PC-3 (cell line): ENCODE measurements at regions of chr10 and their contacts with region 1.

Region 1: DNA sequence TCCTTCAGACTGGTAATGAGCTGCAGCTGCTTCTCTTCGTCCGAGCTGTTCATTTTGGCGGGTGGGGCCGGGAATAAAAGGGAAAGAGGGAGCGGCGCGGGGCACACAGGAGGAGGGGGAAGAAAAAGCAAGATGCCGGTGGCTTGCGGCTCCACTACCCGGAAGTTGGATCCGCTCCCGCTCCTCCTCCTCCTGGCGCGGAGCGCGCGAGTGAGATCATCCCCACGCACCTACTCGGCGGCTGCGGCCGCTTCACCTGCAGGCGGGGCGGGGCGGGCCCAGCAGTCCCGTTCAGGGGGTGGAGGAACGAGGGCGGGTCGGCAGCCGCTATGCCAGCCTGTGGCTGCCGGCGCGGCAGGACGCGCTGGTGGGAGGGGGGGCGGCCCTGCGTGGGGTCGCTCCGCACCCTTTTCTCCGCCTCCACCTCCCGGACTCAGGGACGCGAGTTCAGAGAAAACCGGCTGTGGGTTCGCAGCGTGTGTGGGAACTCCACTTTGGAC is at the start of gene SHTN1:
- DNase-seq: peak; percentile 88
- ATAC-seq: peak; percentile 80
- H3K4me3 ChIP-seq: peak within 1 kb of the TSS; percentile 92
- H3K27ac ChIP-seq: peak within 1 kb of the TSS; percentile 91
- H3K4me1 ChIP-seq: peaks cover 28% of the 10 kb centered on the region
- H3K27me3 ChIP-seq: no peaks in the 10 kb centered on the region
- CTCF ChIP-seq: no peak
- total RNA-seq, gene SHTN1: 9.0 and 13.0 TPM in 2 replicates

Region 2: DNA sequence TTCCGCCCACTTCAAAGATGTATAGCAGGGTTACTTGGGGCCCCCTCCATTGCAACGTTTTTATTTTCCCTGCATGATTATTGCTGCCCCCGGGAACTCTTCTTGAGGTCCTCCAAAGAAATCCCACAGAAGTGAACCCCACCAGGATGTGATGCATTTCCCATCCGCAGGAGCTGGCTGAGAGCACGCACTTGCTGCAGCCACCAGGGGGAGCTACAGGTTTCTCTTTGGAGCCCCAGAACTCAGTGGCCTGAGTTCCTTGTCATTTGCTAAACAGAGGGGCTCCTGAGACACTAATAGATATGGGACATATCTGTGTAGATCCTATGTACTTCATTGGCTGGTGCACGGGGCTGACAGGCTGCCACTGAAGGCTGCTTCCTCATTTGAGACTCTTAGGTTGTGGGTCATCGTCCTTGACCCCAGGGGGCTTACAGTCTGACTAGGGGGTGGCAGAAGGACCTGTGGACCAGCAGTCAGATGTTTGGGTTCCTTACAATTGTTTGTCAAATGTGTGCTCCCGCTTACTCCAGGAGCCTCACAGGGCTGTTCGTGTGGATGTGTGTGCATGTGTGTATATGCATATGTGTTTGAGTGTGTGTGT is 208.1 kb before region 1 on chr10:
- CTCF ChIA-PET with region 1: no interaction called
- POLR2A ChIA-PET with region 1: no interaction called
- intact Hi-C with region 1: loop called (anchors 5 kb)
- DNase-seq: peak; percentile 74
- ATAC-seq: peak; percentile 78
- H3K4me3 ChIP-seq: no peak overlapping the region
- H3K27ac ChIP-seq: no peak overlapping the region
- H3K4me1 ChIP-seq: no peaks in the 10 kb centered on the region
- H3K27me3 ChIP-seq: no peaks in the 10 kb centered on the region
- CTCF ChIP-seq: peak; percentile 89

Region 3: DNA sequence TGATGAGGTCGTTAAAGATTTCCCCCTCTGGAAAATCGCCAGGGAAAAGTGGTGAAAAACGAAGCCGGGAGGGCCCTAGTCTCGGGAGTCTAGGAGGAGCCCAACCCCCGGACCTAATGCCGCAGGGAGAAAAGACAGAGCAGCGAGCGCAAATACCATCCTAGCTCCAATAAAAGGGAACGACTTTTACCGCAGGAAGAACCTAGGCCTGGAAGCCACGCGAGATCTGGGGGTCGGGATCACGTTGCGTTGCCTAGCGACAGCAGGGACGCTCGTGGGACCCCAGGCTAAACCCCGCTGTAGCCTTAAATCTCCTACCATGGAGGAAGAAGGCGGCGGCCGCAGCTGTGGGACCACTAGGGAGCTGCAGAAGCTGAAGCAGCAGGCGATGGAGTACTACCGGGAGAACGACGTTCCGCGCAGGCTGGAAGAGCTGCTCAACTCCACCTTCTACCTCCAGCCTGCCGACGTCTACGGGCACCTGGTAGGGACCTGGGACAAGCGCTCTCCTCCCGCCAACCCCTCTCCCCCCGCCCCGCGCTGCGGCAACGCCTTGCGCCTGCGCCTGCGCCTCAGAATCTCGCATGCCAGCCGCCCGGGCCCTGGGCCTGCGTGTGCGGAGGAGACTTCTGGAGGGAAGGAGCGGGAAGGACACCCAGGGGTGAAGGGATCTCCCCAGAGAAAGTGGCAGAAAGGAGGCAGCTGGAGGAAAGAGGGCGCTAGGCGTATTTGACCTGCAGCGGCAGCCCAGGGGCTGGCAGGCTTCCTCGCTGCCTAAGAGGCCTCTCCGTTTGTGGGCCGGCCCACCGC is 155.6 kb before region 1 on chr10 and contains the start of gene ENO4:
- CTCF ChIA-PET with region 1: no interaction called
- POLR2A ChIA-PET with region 1: no interaction called
- intact Hi-C with region 1: loop called (anchors 1 kb)
- DNase-seq: peak; percentile 69
- ATAC-seq: peak; percentile 86
- H3K4me3 ChIP-seq: peak within 1 kb of the TSS; percentile 93
- H3K27ac ChIP-seq: peak within 1 kb of the TSS; percentile 18; the same call in 1 of the 2 replicates
- H3K4me1 ChIP-seq: peaks cover 7% of the 10 kb centered on the region
- H3K27me3 ChIP-seq: no peaks in the 10 kb centered on the region
- CTCF ChIP-seq: no peak
- total RNA-seq, gene ENO4: 0.35 TPM in 1 of 2 replicates, not detected in the other

Region 4: GRCh38 chr10:116888380-116889055 is 116.6 kb before region 1 on chr10:
- CTCF ChIA-PET with region 1: no interaction called
- POLR2A ChIA-PET with region 1: no interaction called
- intact Hi-C with region 1: loop called (anchors 2 kb)
- DNase-seq: peak; percentile 82
- ATAC-seq: peak; percentile 83
- H3K4me3 ChIP-seq: no peak overlapping the region
- H3K27ac ChIP-seq: peak overlapping the region; percentile 80
- H3K4me1 ChIP-seq: peaks cover 62% of the 10 kb centered on the region
- H3K27me3 ChIP-seq: no peaks in the 10 kb centered on the region
- CTCF ChIP-seq: no peak

Region 5: GRCh38 chr10:116947842-116948529 is 57.1 kb before region 1 on chr10:
- CTCF ChIA-PET with region 1: no interaction called
- POLR2A ChIA-PET with region 1: no interaction called
- intact Hi-C with region 1: loop called (anchors 2 kb)
- DNase-seq: peak; percentile 81
- ATAC-seq: peak; percentile 86
- H3K4me3 ChIP-seq: peak overlapping the region; percentile 58
- H3K27ac ChIP-seq: peak overlapping the region; percentile 79
- H3K4me1 ChIP-seq: peaks cover 22% of the 10 kb centered on the region
- H3K27me3 ChIP-seq: no peaks in the 10 kb centered on the region
- CTCF ChIP-seq: no peak

Region 6: DNA sequence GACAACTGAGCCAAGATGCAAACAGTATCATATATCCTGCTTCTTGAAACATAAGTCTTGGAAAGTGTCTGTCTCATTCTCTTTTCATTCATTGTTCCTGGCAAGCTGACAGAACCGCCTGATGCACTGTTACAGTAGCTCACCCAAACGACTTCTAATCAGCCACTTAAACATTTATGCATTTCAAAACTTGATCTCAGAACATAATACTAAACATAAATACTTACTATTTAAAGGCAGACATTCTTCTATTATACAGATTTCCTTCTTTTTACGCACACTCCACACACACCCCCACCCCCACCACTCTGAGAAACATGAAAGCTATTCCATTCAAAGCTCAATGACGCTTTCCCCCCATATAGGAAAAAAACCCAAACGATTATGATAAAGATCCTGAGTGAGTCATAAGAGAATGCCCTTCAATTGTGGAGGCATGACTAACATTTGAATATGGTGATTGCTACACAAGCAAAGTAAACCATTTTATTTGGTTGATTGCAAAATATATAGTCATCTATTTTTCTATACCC is 30.5 kb before region 1 on chr10:
- CTCF ChIA-PET with region 1: no interaction called
- POLR2A ChIA-PET with region 1: interaction called, 4 read pairs
- intact Hi-C with region 1: loop called (anchors 2 kb)
- DNase-seq: peak; percentile 88
- ATAC-seq: peak; percentile 79
- H3K4me3 ChIP-seq: peak overlapping the region; percentile 56; the same call in 1 of the 2 replicates
- H3K27ac ChIP-seq: peak overlapping the region; percentile 88
- H3K4me1 ChIP-seq: peaks cover 34% of the 10 kb centered on the region
- H3K27me3 ChIP-seq: no peaks in the 10 kb centered on the region
- CTCF ChIP-seq: no peak

Region 7: DNA sequence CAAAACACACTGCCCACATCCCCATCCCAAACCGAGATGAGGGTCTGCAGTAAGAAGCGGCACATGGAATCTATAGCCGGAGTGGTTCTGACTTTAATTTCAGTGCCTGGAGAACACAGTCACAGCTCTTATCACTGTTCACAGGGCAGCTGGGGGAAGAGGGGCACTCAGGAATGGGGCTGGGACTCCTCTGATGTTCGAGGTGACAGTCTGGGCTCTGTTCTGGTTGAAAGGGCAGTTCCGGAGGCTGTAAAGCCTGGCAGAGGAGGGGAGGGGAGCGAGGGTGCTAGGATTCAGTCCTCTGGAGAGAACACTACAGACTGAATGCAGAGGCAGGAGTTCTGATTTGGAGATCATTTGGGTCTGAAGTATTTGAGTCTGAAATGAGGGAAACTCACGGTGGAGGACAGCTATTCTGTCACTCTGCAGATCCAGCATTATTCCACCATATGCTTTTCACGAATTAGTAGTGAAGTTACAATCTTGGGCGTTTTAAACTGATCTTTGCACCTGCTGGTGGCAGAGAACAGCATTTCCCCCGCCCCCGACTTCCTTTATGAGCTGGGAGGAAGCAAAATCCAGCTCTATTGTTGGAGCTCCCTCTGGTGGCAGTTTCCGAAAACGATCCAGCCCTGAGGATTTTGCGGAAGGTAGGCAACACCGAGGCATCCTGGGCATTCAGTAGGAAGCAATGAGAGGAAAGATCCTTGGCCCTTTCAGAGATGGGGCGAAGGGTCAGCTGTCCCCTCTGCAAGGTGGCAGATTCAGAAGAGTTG is 169.6 kb after region 1 on chr10:
- CTCF ChIA-PET with region 1: interaction called, 6 read pairs
- POLR2A ChIA-PET with region 1: no interaction called
- intact Hi-C with region 1: loop called (anchors 10 kb)
- DNase-seq: peak; percentile 92
- ATAC-seq: peak; percentile 81
- H3K4me3 ChIP-seq: peak overlapping the region; percentile 74
- H3K27ac ChIP-seq: no peak overlapping the region
- H3K4me1 ChIP-seq: no peaks in the 10 kb centered on the region
- H3K27me3 ChIP-seq: peaks cover 20% of the 10 kb centered on the region
- CTCF ChIP-seq: peak; percentile 78